ENCODE measurements at regions of chr2 and their contacts with region 1.

Region 1: GRCh38 chr2:228083131-228083530 is 98.4 kb downstream of the SPHKAP start:
- DNase-seq: peak; percentile 25
- H3K4me3 ChIP-seq: no peak overlapping the region
- H3K27ac ChIP-seq: peak overlapping the region; percentile 69
- H3K4me1 ChIP-seq: peaks cover 14% of the 10 kb centered on the region
- H3K27me3 ChIP-seq: no peaks in the 10 kb centered on the region
- CTCF ChIP-seq: no peak

Region 2: GRCh38 chr2:228056293-228057097 is 26.6 kb before region 1 on chr2:
- CTCF ChIA-PET with region 1: no interaction called
- POLR2A ChIA-PET with region 1: no interaction called
- intact Hi-C with region 1: loop called (anchors 2 kb)
- DNase-seq: peak; percentile 86
- H3K4me3 ChIP-seq: no peak overlapping the region
- H3K27ac ChIP-seq: peak overlapping the region; percentile 44
- H3K4me1 ChIP-seq: peaks cover 48% of the 10 kb centered on the region
- H3K27me3 ChIP-seq: no peaks in the 10 kb centered on the region
- CTCF ChIP-seq: no peak

Region 3: DNA sequence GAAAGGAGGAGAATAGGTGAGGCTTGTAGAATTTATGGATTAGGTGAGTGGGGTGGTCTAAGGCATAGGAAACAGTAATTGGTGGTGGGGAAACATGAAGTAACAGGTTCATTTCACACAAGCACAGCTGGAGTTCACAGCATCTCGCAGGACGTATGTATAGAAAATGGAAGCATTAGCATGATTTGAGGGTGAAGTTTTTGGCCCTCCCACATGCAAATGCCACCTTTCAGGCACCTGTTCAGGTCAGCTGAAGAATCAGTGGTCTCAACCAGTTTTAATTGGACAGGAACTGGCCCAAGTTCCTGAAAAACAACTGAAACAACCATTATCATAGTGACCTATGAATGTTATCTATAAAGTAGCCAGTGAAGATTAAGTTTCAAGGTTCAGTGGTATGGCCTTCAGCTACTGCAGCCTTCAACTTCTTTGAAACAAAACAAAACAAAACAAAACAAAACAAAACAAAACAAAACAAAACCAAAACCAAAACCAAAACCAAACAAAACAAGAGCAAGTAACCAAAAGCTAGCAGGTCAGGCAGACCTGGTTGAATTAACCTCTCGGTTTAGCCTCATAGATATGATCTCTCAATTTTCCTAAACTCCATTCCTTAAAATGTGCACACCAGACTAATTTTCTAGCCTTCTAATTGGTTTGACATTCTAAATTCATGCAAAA is 200.5 kb after region 1 on chr2:
- CTCF ChIA-PET with region 1: no interaction called
- POLR2A ChIA-PET with region 1: no interaction called
- intact Hi-C with region 1: no loop called
- DNase-seq: no peak
- H3K4me3 ChIP-seq: no peak overlapping the region
- H3K27ac ChIP-seq: no peak overlapping the region
- H3K4me1 ChIP-seq: no peaks in the 10 kb centered on the region
- H3K27me3 ChIP-seq: no peaks in the 10 kb centered on the region
- CTCF ChIP-seq: no peak

Region 4: DNA sequence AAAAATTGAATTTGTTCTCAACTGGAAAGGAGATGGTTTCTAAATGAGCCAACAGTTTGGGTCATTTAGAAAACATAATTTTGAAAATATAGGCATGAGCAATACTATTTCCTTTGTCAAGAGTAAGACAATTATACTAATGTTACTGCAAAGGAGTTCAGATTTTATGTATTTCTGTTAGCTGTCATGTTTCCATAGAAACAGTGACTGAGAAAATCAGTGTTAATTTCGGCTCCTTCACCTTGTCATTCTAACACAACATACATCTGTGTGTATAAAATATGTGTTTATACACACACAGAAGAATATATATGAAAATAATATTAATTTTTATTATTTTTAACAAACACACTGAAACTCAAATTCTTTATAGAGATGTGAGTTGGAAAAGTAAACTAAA is 276.3 kb after region 1 on chr2:
- CTCF ChIA-PET with region 1: no interaction called
- POLR2A ChIA-PET with region 1: no interaction called
- intact Hi-C with region 1: no loop called
- DNase-seq: no peak
- H3K4me3 ChIP-seq: no peak overlapping the region
- H3K27ac ChIP-seq: no peak overlapping the region
- H3K4me1 ChIP-seq: no peaks in the 10 kb centered on the region
- H3K27me3 ChIP-seq: no peaks in the 10 kb centered on the region
- CTCF ChIP-seq: no peak

Measured in A673 (cell line).